Tibial artery (tissue), 4 donors: ENCODE measurements at regions of chr1 and their contacts with region 1.

Region 1: GRCh38 chr1:209860293-209860881 is 32.6 kb downstream of the UTP25 start:
- DNase-seq: peak; percentile 70 to 75
- H3K4me3 ChIP-seq: no peak overlapping the region
- H3K27ac ChIP-seq: no peak overlapping the region
- H3K4me1 ChIP-seq: no peaks in the 10 kb centered on the region
- H3K27me3 ChIP-seq: peaks cover 0 to 21% of the 10 kb centered on the region in 2 donors
- CTCF ChIP-seq: peak; percentile 52 to 79

Region 2: DNA sequence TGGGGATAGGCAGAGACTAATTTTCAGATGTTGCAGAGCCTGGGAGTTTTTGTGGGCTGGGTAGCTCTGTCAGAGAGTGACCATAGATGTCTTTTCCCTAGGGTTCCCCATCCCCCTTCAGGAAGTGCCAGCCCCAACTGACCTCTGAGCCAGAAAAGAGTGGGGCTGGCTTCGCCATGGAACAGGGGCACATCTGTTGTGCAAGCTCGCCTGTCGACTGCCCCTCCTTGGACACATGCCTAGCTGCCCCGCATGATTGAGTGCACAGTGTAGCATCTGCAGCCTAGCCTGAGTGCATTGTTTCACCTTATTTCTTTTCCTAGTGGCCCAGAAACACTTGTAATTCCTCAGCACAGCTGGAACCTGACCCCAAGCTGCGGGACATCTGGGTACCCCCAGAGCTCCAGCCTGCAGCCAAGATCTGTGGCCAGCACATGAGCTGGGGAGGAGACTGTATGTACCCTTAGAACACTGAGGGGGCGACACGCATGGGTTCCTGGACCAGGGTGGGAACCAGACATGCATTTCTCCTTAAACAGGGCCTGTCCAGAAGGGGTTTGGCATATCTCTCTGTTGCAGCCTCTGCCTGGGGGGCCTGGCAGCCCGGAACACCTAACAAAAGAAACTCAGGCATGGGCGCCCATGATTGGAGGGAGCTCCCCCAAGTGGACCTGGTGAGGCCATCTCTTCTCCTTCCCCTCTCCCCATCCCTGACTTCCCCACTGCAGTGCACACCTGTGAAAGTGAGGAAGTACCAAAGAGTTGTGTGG is 132.9 kb after region 1 on chr1:
- intact Hi-C with region 1: loop called (anchors 10 kb)
- DNase-seq: no peak
- H3K4me3 ChIP-seq: no peak overlapping the region
- H3K27ac ChIP-seq: no peak overlapping the region
- H3K4me1 ChIP-seq: no peaks in the 10 kb centered on the region
- H3K27me3 ChIP-seq: no peaks in the 10 kb centered on the region
- CTCF ChIP-seq: no peak